ENCODE measurements at regions of chr2 and their contacts with region 1.

Region 1: GRCh38 chr2:167844714-167845530 is 402.5 kb downstream of the STK39 start:
- DNase-seq: no peak
- ATAC-seq: no peak
- H3K4me3 ChIP-seq: no peak overlapping the region
- H3K27ac ChIP-seq: no peak overlapping the region
- H3K4me1 ChIP-seq: no peaks in the 10 kb centered on the region
- H3K27me3 ChIP-seq: no peaks in the 10 kb centered on the region
- CTCF ChIP-seq: no peak; the same call in 1 of the 2 replicates

Region 2: DNA sequence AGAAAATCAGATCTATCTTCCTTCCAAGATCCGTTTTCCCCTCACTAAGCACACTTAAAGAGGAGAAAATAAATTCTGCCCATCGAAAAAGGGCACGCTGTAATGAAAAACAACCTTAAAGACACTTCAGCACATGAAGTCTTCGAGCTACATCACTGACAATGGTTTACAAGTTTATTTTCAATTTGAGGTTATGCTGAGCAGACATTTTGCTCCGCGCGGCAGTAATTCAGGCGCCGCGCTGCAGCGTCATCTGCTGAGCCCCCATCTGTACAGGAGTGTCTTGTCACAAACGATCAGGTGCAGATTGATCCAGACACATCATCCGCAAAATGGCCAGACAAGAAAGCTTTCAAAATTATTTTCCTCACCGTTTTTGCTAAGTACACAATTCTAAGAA is 60.7 kb after region 1 on chr2:
- CTCF ChIA-PET with region 1: no interaction called
- POLR2A ChIA-PET with region 1: no interaction called
- in situ Hi-C with region 1: no loop called
- intact Hi-C with region 1: loop called (anchors 2 kb)
- DNase-seq: no peak
- ATAC-seq: no peak
- H3K4me3 ChIP-seq: no peak overlapping the region
- H3K27ac ChIP-seq: no peak overlapping the region
- H3K4me1 ChIP-seq: no peaks in the 10 kb centered on the region
- H3K27me3 ChIP-seq: no peaks in the 10 kb centered on the region; the same call in 1 of the 2 replicates
- CTCF ChIP-seq: no peak